ENCODE measurements at regions of chr10 and their contacts with region 1.

Region 1: GRCh38 chr10:77004917-77005564 is 632.6 kb downstream of the KCNMA1 start:
- DNase-seq: peak; percentile 58
- ATAC-seq: peak; percentile 92
- H3K4me3 ChIP-seq: no peak overlapping the region
- H3K27ac ChIP-seq: no peak overlapping the region
- H3K4me1 ChIP-seq: no peaks in the 10 kb centered on the region
- H3K27me3 ChIP-seq: no peaks in the 10 kb centered on the region
- CTCF ChIP-seq: peak; percentile 74
- POLR2A ChIP-seq: no peak
- RAD21 ChIP-seq: peak; percentile 72

Region 2: GRCh38 chr10:77111611-77112550 is 106.8 kb after region 1 on chr10:
- CTCF ChIA-PET with region 1: interaction called, 4 read pairs
- POLR2A ChIA-PET with region 1: no interaction called
- dilution Hi-C with region 1: no loop called
- in situ Hi-C with region 1: no loop called
- intact Hi-C with region 1: loop called (anchors 1 kb)
- DNase-seq: peak; percentile 87
- ATAC-seq: peak; percentile 90
- H3K4me3 ChIP-seq: no peak overlapping the region
- H3K27ac ChIP-seq: no peak overlapping the region
- H3K4me1 ChIP-seq: peaks cover 3% of the 10 kb centered on the region
- H3K27me3 ChIP-seq: no peaks in the 10 kb centered on the region
- CTCF ChIP-seq: peak; percentile 88
- POLR2A ChIP-seq: peak; percentile 38; the same call in 1 of the 2 replicates
- RAD21 ChIP-seq: peak; percentile 93

Measured in IMR-90 (cell line).